GM10248 (cell line): ENCODE measurements at regions of chr5 and their contacts with region 1.

Region 1: GRCh38 chr5:88238732-88239131 is 29.9 kb downstream of the TMEM161B start:
- DNase-seq: no peak
- CTCF ChIP-seq: no peak

Region 2: GRCh38 chr5:88226881-88227450 is 11.8 kb before region 1 on chr5:
- CTCF ChIA-PET with region 1: interaction called, 11 read pairs
- POLR2A ChIA-PET with region 1: no interaction called
- DNase-seq: peak; percentile 13
- CTCF ChIP-seq: no peak